HepG2 (cell line): ENCODE measurements at regions of chr10 and their contacts with region 1.

Region 1: GRCh38 chr10:87850742-87851205 is 12.6 kb downstream of the KLLN start:
- DNase-seq: peak; percentile 67
- ATAC-seq: peak; percentile 96
- H3K4me3 ChIP-seq: no peak overlapping the region
- H3K27ac ChIP-seq: no peak overlapping the region
- H3K4me1 ChIP-seq: peaks cover 12% of the 10 kb centered on the region
- H3K27me3 ChIP-seq: no peaks in the 10 kb centered on the region
- CTCF ChIP-seq: peak; percentile 83
- EP300 ChIP-seq: no peak
- POLR2A ChIP-seq: no peak
- RAD21 ChIP-seq: peak; percentile 65; the same call in 1 of the 2 replicates

Region 2: GRCh38 chr10:88553116-88553752 is 702.5 kb after region 1 on chr10:
- CTCF ChIA-PET with region 1: no interaction called
- POLR2A ChIA-PET with region 1: no interaction called
- in situ Hi-C with region 1: loop called (anchors 10 kb)
- intact Hi-C with region 1: loop called (anchors 1 kb)
- DNase-seq: peak; percentile 21
- ATAC-seq: peak; percentile 92
- H3K4me3 ChIP-seq: no peak overlapping the region
- H3K27ac ChIP-seq: no peak overlapping the region
- H3K4me1 ChIP-seq: no peaks in the 10 kb centered on the region
- H3K27me3 ChIP-seq: no peaks in the 10 kb centered on the region
- CTCF ChIP-seq: peak; percentile 75
- EP300 ChIP-seq: no peak
- POLR2A ChIP-seq: no peak
- RAD21 ChIP-seq: no peak